AG04450 (cell line): ENCODE measurements at regions of chr3 and their contacts with region 1.

Region 1: GRCh38 chr3:52471371-52472238 is 16.2 kb downstream of the NISCH start:
- DNase-seq: no peak
- H3K4me3 ChIP-seq: no peak overlapping the region
- H3K27ac ChIP-seq: no peak overlapping the region
- H3K27me3 ChIP-seq: no peaks in the 10 kb centered on the region
- CTCF ChIP-seq: peak; percentile 71

Region 2: GRCh38 chr3:52456169-52456799 is 15.3 kb before region 1 on chr3:
- CTCF ChIA-PET with region 1: interaction called, 14 read pairs
- POLR2A ChIA-PET with region 1: no interaction called
- DNase-seq: no peak
- H3K4me3 ChIP-seq: peak overlapping the region; percentile 80
- H3K27ac ChIP-seq: peak overlapping the region; percentile 39
- H3K27me3 ChIP-seq: no peaks in the 10 kb centered on the region
- CTCF ChIP-seq: no peak

Region 3: DNA sequence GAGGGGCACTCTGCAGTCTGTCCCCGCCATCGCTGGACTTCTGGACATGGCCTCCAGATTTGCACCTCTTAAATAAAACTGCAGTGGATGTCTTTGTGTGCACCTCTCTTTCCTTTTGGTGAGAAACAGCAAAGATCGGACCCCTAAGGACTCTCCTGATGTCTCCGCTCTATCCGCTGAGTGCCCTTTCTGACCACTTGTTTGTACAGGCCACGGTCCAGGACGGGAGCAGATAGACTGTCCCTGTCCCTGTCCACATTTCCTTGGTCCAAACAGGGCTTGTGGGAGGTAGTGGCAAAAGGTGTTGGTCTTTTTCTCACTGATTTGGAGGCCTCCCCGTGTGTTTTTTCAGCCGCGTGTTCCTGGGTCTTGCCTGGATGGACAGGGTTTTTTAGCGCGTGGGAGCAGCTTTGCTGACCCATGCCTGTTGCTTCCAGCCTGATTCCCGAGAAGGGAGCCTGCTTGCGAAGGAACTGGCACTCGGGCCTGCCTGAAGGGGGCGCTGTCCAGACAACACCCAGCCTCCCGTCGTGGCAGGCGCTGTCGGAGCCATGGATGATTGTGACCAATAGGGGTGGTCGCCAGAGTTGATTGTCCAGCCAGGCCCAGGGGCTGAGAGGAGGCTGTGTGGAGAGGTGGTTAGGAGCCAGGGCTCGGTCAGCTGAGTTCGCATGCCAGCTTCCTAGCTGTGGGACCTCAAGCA is 10.4 kb after region 1 on chr3:
- CTCF ChIA-PET with region 1: interaction called, 11 read pairs
- POLR2A ChIA-PET with region 1: no interaction called
- DNase-seq: no peak
- H3K4me3 ChIP-seq: no peak overlapping the region
- H3K27ac ChIP-seq: no peak overlapping the region
- H3K27me3 ChIP-seq: no peaks in the 10 kb centered on the region
- CTCF ChIP-seq: peak; percentile 45